ENCODE measurements at regions of chr3 and their contacts with region 1.

Region 1: DNA sequence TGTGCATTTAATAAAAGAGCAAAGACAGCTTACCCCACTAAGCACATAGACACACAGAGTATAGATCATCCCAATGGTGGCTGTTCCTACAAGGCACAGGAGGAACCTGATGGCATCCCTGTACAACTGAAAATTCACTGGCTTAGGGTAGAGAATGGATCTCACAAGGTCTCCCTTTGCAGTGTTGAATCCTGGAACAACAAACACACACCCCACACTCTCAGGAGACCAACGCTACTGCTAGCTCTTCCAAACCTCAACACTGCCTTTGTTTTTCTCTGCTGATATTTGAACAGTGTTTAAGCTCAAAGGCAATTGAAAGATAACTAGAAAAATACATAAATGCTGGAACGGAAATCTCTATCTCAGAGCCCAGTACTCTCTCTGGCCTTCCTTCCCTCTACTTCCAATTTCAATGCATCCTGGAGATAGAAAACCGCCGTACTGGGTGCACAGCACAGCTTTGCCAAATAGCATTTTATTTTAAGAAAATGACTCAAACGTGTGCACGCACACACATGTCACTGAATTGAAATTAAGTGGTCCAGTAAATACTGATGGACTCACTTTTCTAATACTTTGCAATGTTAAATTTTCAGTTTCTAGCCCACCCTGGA is 87.5 kb upstream of the ATP13A5 start:
- DNase-seq: no peak
- H3K4me3 ChIP-seq: no peak overlapping the region
- H3K27ac ChIP-seq: no peak overlapping the region
- H3K27me3 ChIP-seq: no peaks in the 10 kb centered on the region
- CTCF ChIP-seq: no peak

Region 2: DNA sequence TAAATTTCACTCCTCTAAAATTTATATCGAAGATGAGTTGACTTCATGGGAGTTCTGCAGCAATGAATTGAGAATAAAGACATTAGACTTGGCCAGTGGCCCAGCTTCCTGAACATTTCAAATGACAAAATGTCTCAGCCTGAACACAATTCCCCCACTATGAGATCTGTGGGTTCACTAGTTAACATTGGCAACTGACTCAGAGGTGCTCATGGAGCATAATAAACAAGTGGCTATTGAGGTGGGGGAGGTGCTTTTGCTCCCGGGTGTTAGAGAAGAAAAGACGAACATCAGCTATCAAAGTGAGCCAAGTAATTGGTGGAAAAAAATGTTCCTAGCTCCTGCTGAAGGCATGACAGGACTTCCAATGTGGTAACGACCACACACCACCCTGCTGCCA is 82.3 kb after region 1 on chr3:
- intact Hi-C with region 1: loop called in 1 of 2 experiments (anchors 10 kb)
- DNase-seq: peak in 3 of 10 donors; percentile 31 to 46 (median 39)
- H3K4me3 ChIP-seq: peak overlapping the region in 18 of 59 donors; percentile 0 to 41 (median 13)
- H3K27ac ChIP-seq: peak overlapping the region in 26 of 59 donors; percentile 0 to 79 (median 52)
- H3K27me3 ChIP-seq: no peaks in the 10 kb centered on the region
- CTCF ChIP-seq: no peak

Region 3: GRCh38 chr3:193572426-193572908 is 106.4 kb after region 1 on chr3:
- intact Hi-C with region 1: loop called in 1 of 2 experiments (anchors 1 kb)
- DNase-seq: peak in 8 of 10 donors; percentile 51 to 82 (median 64)
- H3K4me3 ChIP-seq: no peak overlapping the region
- H3K27ac ChIP-seq: no peak overlapping the region
- H3K27me3 ChIP-seq: no peaks in the 10 kb centered on the region
- CTCF ChIP-seq: peak; percentile 66 to 96 (median 86)